Transverse colon (tissue), 4 donors: ENCODE measurements at regions of chr4 and their contacts with region 1.

Region 1: GRCh38 chr4:100811046-100811445 is 293.2 kb upstream of the EMCN start:
- DNase-seq: no peak
- H3K4me3 ChIP-seq: no peak overlapping the region
- H3K27ac ChIP-seq: no peak overlapping the region
- H3K4me1 ChIP-seq: no peaks in the 10 kb centered on the region
- H3K27me3 ChIP-seq: no peaks in the 10 kb centered on the region
- CTCF ChIP-seq: no peak
- EP300 ChIP-seq: no peak
- POLR2A ChIP-seq: no peak

Region 2: GRCh38 chr4:100428051-100428450 is 383.0 kb before region 1 on chr4:
- in situ Hi-C with region 1: no loop called
- intact Hi-C with region 1: no loop called
- DNase-seq: no peak
- H3K4me3 ChIP-seq: no peak overlapping the region
- H3K27ac ChIP-seq: no peak overlapping the region
- H3K4me1 ChIP-seq: no peaks in the 10 kb centered on the region
- H3K27me3 ChIP-seq: no peaks in the 10 kb centered on the region
- CTCF ChIP-seq: no peak
- EP300 ChIP-seq: no peak
- POLR2A ChIP-seq: no peak

Region 3: GRCh38 chr4:102734591-102735385 is 1923.7 kb after region 1 on chr4:
- in situ Hi-C with region 1: no loop called
- intact Hi-C with region 1: loop called (anchors 5 kb)
- DNase-seq: no peak
- H3K4me3 ChIP-seq: no peak overlapping the region
- H3K27ac ChIP-seq: no peak overlapping the region
- H3K4me1 ChIP-seq: peaks cover 0 to 6% (median 1%) of the 10 kb centered on the region in 4 donors
- H3K27me3 ChIP-seq: no peaks in the 10 kb centered on the region
- CTCF ChIP-seq: no peak
- EP300 ChIP-seq: no peak
- POLR2A ChIP-seq: no peak